Dorsolateral prefrontal cortex (tissue), 120 donors: ENCODE measurements at regions of chr7 and their contacts with region 1.

Region 1: DNA sequence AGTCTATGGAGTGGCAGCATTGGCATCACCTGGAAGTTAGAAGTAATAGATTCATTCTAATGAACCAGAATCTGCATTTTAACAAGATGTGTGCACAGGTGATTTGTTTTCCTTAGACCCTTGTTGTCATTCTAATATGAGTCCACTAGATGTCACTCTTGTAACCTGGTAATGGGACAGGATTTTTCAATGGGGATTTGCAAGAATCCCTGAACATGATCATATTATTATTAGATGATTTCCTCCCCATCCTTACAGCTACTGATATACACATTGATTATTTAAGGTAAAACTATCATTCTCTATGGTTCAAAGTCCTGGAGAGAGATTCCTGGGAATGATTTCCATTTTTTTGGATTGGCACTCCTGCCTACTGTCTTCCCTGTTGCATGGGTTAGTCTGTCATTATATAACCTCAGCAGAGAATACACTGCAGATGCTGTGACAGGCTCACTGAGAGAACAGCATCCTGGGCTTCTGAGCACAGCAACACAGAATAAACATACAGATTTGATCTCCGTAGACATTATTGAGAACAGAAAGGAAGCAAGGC is 194.9 kb downstream of the SUGCT start:
- DNase-seq: peak in 1 of 10 donors; percentile 25
- H3K4me3 ChIP-seq: no peak overlapping the region
- H3K27ac ChIP-seq: peak overlapping the region in 20 of 59 donors; percentile 1 to 75 (median 40)
- H3K27me3 ChIP-seq: no peaks in the 10 kb centered on the region
- CTCF ChIP-seq: peak; percentile 70 to 92 (median 84)

Region 2: GRCh38 chr7:40604601-40605438 is 275.1 kb after region 1 on chr7:
- intact Hi-C with region 1: loop called in 1 of 2 experiments (anchors 2 kb)
- DNase-seq: peak in 9 of 10 donors; percentile 12 to 72 (median 43)
- H3K4me3 ChIP-seq: no peak overlapping the region
- H3K27ac ChIP-seq: no peak overlapping the region
- H3K27me3 ChIP-seq: no peaks in the 10 kb centered on the region
- CTCF ChIP-seq: peak in 54 of 56 donors; percentile 20 to 80 (median 64)

Region 3: DNA sequence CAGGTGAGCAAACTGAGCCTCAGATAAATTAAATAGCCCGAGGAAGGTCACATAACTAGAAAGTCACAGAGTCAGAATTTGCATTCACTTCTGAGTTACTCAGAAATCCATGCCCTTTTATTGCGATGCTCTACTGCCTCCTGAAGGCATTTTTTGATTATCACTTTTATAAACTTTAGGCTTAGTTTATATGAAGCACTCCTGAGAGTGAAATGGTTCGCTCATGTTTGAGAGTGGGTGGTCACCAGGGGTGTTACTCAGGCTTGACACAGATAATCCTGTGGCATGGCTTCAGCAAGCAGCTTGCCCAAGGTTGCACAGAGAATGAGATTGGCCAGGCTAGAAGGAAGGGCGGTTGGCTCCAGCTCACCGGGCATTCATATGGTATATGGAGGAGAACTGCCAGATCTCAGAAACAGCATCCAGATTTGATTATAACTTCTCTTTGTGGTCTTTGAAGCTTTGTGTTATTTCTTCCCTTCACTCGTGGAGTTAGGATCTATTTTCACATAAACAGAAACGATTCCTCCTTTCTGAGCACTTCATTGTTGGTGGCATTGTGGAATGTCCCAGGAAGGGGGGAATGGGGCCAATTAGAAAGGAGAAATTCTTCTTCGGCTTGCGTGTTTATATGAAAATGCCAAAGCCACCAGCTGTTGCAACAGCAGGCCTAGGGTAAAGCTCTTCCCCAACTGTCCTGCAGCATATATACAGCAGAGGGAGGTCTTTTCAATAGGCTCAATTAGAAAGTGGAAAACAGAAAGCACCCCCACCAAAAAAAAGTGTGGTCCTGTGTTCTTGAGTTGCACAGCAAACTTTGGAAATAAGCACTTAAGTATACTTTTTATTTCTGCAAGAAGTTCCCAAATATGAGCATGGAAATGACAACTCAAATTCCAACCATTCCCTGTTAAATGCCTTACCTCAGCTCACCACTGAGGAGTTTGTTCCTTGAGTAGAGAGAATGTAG is 433.9 kb after region 1 on chr7:
- intact Hi-C with region 1: loop called (anchors 5 to 10 kb)
- DNase-seq: no peak
- H3K4me3 ChIP-seq: no peak overlapping the region
- H3K27ac ChIP-seq: no peak overlapping the region
- H3K27me3 ChIP-seq: peaks cover 0 to 6% (median 0%) of the 10 kb centered on the region in 45 donors
- CTCF ChIP-seq: peak in 42 of 56 donors; percentile 10 to 58 (median 28)

Region 4: DNA sequence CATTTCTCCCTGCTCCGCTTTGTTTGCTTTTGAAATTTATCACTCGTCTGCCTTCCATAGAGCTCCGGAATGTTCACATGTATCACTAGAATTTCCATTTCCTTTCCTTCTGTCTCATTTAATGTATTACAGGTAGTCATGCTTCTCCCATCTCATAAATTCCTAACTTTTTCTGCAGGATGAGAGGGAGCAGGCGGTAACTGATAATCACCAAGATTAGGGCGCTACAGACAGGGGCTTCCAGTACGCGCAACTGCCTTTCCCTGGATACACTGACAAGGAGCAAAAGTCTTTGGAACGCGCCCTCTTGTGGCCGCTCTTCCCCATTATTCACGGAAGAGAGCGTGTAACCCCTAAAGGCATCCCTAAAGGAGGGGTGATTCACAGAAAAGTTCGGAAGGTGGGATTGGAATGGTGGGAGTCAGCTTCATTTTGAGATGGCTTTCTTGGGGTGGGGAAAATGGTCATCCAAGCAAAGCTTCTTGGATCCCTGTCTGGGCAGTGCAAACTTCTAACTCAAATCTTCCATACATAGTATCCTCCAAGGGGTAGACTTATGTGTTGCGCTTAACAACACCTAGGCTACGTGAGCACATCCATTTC is 1366.7 kb after region 1 on chr7:
- intact Hi-C with region 1: loop called (anchors 10 kb)
- DNase-seq: peak in 8 of 10 donors; percentile 47 to 78 (median 70)
- H3K4me3 ChIP-seq: peak overlapping the region in 50 of 59 donors; percentile 3 to 58 (median 33)
- H3K27ac ChIP-seq: peak overlapping the region in 27 of 59 donors; percentile 4 to 79 (median 34)
- H3K27me3 ChIP-seq: peaks cover 0 to 43% (median 4%) of the 10 kb centered on the region in 45 donors
- CTCF ChIP-seq: peak; percentile 53 to 79 (median 67)

Region 5: GRCh38 chr7:41705109-41705901 is 1375.6 kb after region 1 on chr7:
- intact Hi-C with region 1: loop called in 1 of 2 experiments (anchors 10 kb)
- DNase-seq: peak; percentile 39 to 85 (median 72)
- H3K4me3 ChIP-seq: peak overlapping the region; percentile 26 to 81 (median 62)
- H3K27ac ChIP-seq: peak overlapping the region in 56 of 59 donors; percentile 1 to 89 (median 72)
- H3K27me3 ChIP-seq: peaks cover 0 to 40% (median 4%) of the 10 kb centered on the region in 45 donors
- CTCF ChIP-seq: peak in 53 of 56 donors; percentile 30 to 70 (median 49)

Region 6: DNA sequence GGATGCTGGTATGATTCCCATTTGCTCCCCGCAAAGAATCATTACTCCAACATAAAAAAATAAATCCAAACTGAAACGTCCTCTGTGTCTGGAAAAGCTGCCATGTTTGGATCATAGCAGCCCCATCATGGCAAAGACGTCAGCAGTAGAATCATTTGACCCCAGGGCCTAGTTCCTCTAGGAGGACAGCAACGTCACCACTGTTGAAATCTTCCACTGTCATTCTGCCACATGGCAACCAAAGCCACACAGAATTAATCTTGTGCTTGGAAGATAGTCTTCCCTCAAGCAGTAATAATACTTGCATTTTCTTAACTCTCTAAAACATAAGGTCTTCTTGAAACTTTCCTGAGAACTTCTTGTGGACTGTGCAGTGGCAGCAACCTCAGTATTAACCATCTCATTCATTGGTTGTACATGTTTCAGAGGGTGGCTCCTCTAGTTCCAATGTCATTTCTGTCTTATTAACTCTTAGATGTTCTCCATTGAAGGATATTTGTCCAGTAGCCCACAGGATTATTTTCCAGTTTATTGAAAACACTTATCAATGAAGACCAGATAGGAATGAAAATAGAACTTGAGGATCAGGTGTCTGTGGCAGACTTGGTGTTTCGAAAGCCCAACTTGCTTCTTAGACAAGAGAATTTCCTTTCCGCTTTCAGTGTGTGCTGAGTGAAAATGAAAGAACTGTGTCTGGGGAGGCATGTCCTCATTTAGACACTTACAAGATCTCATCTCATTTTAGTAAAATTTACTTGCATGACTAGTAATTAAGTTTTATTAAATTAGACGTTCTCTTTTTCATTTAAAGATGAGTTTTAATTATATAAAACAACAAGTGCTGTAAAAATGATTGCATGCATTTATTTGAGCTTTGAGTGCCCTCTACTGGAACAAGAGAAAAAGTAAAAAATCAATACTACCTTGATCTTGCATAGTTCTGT is 1402.1 kb after region 1 on chr7:
- intact Hi-C with region 1: loop called in 1 of 2 experiments (anchors 10 kb)
- DNase-seq: no peak
- H3K4me3 ChIP-seq: peak overlapping the region in 2 of 59 donors; percentile 8 to 14
- H3K27ac ChIP-seq: peak overlapping the region in 13 of 59 donors; percentile 2 to 49 (median 30)
- H3K27me3 ChIP-seq: peaks cover 0 to 7% (median 0%) of the 10 kb centered on the region in 45 donors
- CTCF ChIP-seq: peak; percentile 31 to 78 (median 54)